ENCODE measurements at regions of chr12 and their contacts with region 1.

Region 1: DNA sequence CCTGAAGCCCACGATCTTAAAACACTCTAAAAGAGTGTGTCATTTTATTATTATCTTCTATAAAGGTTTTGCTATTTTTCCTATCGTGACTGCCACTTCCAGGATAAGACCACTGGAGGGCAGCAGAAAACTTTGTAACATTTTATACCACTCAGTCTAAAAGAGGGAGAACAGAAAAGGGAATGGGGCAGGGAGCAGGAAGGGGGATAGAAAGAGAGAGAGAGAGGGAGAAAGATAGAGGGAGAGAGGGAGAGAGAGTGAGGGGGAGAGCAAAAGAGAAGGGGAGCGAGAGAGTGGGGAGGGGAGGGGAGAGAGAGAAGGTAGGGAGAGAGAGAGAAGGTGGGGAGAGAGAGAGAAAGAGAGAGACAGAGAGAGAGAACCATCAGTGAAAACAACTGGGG is 2.0 kb upstream of the ART4 start:
- DNase-seq: peak; percentile 40 to 52
- H3K4me3 ChIP-seq: no peak overlapping the region
- H3K27ac ChIP-seq: no peak overlapping the region
- H3K4me1 ChIP-seq: peaks cover 33% of the 10 kb centered on the region
- H3K27me3 ChIP-seq: no peaks in the 10 kb centered on the region
- CTCF ChIP-seq: peak; percentile 93

Region 2: GRCh38 chr12:14769969-14770495 is 75.3 kb before region 1 on chr12:
- CTCF ChIA-PET with region 1: interaction called, 3 read pairs
- POLR2A ChIA-PET with region 1: no interaction called
- intact Hi-C with region 1: loop called (anchors 2 kb)
- DNase-seq: peak; percentile 77 to 90
- H3K4me3 ChIP-seq: peak overlapping the region; percentile 99
- H3K27ac ChIP-seq: peak overlapping the region; percentile 83
- H3K4me1 ChIP-seq: peaks cover 27% of the 10 kb centered on the region
- H3K27me3 ChIP-seq: no peaks in the 10 kb centered on the region
- CTCF ChIP-seq: peak; percentile 87

Region 3: DNA sequence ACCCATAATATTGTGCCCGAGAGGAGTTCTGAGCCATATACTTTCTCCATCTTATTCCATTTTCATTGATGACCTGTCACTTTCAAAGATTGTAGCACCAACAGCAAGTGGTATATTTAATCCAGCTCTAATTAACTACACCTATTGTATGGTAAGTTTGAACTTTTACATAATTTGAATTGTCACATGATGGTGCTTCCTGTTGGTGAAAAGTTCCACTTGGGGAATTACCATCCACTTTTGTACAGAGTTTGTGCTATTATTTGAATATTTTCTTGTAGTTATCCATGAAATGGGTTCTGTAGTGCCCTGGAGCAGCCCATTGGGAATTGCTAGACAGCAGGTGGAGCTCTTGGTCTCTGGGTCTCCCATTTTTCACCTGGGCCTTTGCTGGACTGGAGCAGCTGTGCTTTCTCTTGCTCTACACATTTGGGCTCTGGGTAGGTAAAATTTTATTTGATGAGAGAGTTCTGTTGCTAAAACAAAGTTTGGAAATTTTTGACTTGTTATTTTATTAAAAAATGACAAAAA is 34.3 kb before region 1 on chr12:
- CTCF ChIA-PET with region 1: interaction called, 3 read pairs
- POLR2A ChIA-PET with region 1: interaction called, 3 read pairs
- intact Hi-C with region 1: loop called (anchors 1 kb)
- DNase-seq: peak in 1 of 2 experiments; percentile 63
- H3K4me3 ChIP-seq: no peak overlapping the region
- H3K27ac ChIP-seq: no peak overlapping the region
- H3K4me1 ChIP-seq: no peaks in the 10 kb centered on the region
- H3K27me3 ChIP-seq: no peaks in the 10 kb centered on the region
- CTCF ChIP-seq: peak; percentile 66

Region 4: GRCh38 chr12:14952299-14952921 is 107.1 kb after region 1 on chr12:
- CTCF ChIA-PET with region 1: interaction called, 10 read pairs
- POLR2A ChIA-PET with region 1: no interaction called
- intact Hi-C with region 1: loop called (anchors 2 kb)
- DNase-seq: peak; percentile 64 to 98
- H3K4me3 ChIP-seq: 0 out of 2 replicates have a peak overlapping the region, but pooled peaks have one; percentile 0
- H3K27ac ChIP-seq: peak overlapping the region; percentile 83
- H3K4me1 ChIP-seq: peaks cover 72% of the 10 kb centered on the region
- H3K27me3 ChIP-seq: no peaks in the 10 kb centered on the region
- CTCF ChIP-seq: no peak

Region 5: GRCh38 chr12:15151161-15152120 is 306.1 kb after region 1 on chr12:
- CTCF ChIA-PET with region 1: no interaction called
- POLR2A ChIA-PET with region 1: no interaction called
- intact Hi-C with region 1: loop called (anchors 10 kb)
- DNase-seq: no peak
- H3K4me3 ChIP-seq: no peak overlapping the region
- H3K27ac ChIP-seq: no peak overlapping the region
- H3K4me1 ChIP-seq: peaks cover 19% of the 10 kb centered on the region
- H3K27me3 ChIP-seq: no peaks in the 10 kb centered on the region
- CTCF ChIP-seq: peak; percentile 73

Region 6: GRCh38 chr12:15268927-15269552 is 423.7 kb after region 1 on chr12:
- CTCF ChIA-PET with region 1: no interaction called
- POLR2A ChIA-PET with region 1: no interaction called
- intact Hi-C with region 1: loop called (anchors 1 kb)
- DNase-seq: peak; percentile 53 to 63
- H3K4me3 ChIP-seq: no peak overlapping the region
- H3K27ac ChIP-seq: no peak overlapping the region
- H3K4me1 ChIP-seq: 0 out of 2 replicates have a peak, but pooled peaks cover 2% of the 10 kb centered on the region
- H3K27me3 ChIP-seq: no peaks in the 10 kb centered on the region
- CTCF ChIP-seq: peak; percentile 92

Measured in PC-9 (cell line).